ENCODE measurements at regions of chrX and their contacts with region 1.

Region 1: DNA sequence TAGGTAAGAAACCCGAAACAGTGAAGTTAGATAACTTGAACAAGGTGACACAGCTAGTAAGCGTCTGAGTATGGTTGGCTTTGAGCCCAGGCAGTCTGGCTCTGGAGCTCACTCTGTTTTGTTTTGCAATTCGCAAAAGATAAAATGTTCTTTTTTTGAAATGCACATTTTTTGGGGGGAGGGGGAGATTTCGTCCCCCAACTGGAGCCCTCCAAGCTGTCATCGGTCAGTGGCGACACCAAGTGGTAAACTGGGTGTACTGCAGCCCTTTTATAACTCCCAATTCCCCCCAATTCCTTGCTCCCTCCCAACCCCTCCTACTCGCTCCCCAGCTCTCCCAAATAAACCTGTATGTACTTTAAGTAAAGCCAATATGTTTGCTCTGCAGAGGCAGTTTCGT is 2.8 kb upstream of the CLCN5 start:
- DNase-seq: peak; percentile 45

Region 2: GRCh38 chrX:49816435-49816834 is 103.2 kb before region 1 on chrX:
- CTCF ChIA-PET with region 1: no interaction called
- POLR2A ChIA-PET with region 1: no interaction called
- DNase-seq: no peak

Region 3: DNA sequence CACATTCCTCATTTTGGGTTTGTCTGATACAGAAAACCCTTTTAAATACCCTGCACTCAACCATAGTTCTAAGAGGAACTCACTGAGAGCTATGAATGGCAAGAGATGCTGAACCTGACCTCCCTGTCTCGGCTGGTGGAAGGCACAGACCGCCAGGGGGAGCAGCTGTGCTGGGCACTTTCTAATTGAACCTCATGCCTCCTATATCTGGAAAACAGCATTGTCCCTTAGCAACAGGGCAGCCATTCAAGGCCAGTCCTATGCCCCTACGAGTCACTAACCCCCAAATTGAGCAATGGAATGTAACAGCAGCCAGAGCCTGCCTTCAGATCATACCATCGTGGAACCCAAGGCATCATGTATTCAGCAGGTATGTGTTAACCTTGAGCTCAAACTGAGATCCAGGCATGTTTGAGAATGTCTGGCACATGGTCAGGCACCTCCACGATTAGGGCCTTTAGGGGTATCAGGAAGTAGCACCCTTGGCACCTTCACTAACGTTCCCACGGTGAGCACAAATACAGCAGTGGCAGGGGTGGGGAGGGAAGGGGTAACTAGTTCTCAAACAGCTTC is 35.2 kb before region 1 on chrX:
- CTCF ChIA-PET with region 1: interaction called, 10 read pairs
- POLR2A ChIA-PET with region 1: no interaction called
- DNase-seq: peak; percentile 66

Region 4: GRCh38 chrX:49934148-49934547 is 14.5 kb after region 1 on chrX:
- CTCF ChIA-PET with region 1: no interaction called
- POLR2A ChIA-PET with region 1: no interaction called
- DNase-seq: no peak

Region 5: DNA sequence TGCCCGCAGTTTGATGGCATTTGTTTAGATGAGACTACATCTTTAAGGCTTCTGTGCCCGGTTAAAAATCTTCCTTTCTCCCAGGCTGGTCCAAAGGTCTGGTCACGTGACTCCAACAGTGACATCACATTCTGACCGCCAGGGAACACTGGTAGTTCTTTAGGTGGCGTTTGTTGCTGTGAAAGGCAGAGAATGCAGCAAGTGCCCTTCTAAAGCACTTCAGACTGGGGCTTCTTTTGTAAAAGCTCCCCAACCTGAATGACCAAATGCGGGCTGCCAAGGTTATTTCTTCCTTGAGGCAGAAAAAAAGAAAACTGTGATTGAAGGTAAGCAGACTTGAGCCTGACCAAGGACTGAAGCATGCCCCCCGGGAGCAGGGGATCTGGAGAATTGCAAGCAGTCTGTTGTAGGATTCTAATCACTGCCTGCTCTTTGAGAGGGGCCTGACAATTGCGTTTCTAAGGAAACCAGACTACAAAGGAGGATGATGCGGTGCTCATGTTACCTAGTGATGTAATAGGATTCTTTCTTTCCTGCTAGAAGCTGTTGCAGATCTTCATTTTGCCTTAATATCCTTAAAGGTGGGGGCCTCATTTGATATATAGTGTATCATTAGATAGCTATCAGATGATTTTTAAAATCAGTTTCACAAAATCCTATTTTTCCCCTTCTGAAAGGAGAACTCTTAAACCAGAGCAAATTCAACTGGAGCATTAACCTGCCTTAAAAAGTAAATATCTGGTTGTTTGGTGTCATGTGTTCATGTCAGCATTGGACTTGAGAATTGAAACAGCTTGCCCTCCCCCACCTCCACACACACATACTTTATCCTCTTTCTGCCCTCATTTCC is 148.0 kb after region 1 on chrX:
- CTCF ChIA-PET with region 1: no interaction called
- POLR2A ChIA-PET with region 1: no interaction called
- DNase-seq: peak; percentile 48